Motor neuron (in vitro differentiated cells): ENCODE measurements at regions of chr1 and their contacts with region 1.

Region 1: DNA sequence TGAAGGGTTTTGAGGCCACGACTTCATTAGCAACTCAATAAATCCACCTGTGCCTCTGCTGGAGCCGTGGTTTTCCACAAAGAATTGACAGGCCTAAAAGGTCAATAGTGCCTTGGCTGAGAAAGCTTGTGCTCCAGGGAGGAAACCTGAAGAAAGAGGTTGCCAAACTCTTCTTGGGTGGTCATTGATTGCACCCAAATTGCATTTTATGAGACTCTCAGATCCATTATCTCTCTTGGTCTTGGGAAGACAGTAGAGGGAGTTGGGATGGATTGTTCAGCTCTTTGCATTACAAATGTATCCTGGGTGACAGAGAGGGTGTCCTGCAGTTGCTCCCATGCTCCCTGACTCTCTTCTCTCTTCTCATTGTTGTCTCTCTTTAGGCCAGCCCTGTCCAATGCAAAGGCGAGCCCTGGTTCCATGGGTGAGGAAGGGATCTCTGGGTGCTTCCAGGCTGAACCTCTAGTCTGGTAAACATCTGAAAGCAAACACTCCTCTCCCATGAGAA is 46.1 kb upstream of the HTR1D start:
- ATAC-seq: peak in 5 of 8 experiments; percentile 79 to 93 (median 90)
- H3K4me3 ChIP-seq: no peak overlapping the region
- H3K27ac ChIP-seq: peak overlapping the region; percentile 74 to 80
- H3K4me1 ChIP-seq: peaks cover 23 to 25% of the 10 kb centered on the region in 2 donors

Region 2: GRCh38 chr1:23216771-23217420 is 46.5 kb before region 1 on chr1:
- in situ Hi-C with region 1: loop called in 1 of 9 experiments (anchors 10 kb)
- ATAC-seq: peak; percentile 29 to 75 (median 64)
- H3K4me3 ChIP-seq: peak overlapping the region; percentile 39 to 69 (median 53)
- H3K27ac ChIP-seq: peak overlapping the region in 1 of 2 donors; percentile 76
- H3K4me1 ChIP-seq: peaks cover 0 to 22% of the 10 kb centered on the region in 2 donors